HepG2 (cell line): ENCODE measurements at regions of chr1 and their contacts with region 1.

Region 1: DNA sequence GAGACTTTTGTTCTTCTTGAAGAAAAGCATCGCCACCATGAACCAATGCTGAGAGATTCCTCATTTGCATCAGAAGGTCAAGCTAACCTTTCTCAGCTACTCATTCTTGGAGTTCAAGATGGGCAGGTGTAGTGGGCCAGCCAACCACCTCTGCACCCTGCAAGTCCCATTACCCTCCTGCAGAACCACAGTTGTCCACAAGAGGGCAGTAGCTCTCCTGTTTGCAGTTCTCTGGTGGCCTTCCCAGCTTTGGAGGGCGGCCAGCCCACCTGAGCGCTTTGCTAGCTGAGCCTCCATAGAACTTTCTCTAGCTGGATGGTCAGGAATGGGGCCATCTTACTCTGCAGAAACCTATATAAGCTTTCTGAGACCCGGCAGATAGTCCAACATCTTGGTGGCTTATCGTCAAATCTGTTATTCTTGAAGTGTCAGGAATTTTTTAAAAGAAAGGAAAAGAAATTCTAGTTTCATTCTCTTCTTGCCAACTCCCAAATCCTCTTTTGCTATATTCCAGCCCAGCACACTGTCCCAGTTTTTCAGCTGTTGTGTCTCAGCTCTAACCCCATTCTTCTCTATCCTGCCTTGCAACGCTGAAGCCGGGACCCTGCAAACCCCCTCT is 11.0 kb upstream of the LMX1A start:
- DNase-seq: peak; percentile 73
- ATAC-seq: peak; percentile 89
- H3K4me3 ChIP-seq: no peak overlapping the region
- H3K27ac ChIP-seq: no peak overlapping the region
- H3K4me1 ChIP-seq: peaks cover 10% of the 10 kb centered on the region
- H3K27me3 ChIP-seq: no peaks in the 10 kb centered on the region; a peak in 1 of 5 replicates
- CTCF ChIP-seq: peak; percentile 83
- EP300 ChIP-seq: no peak
- POLR2A ChIP-seq: no peak
- RAD21 ChIP-seq: no peak

Region 2: GRCh38 chr1:165114022-165114888 is 253.2 kb before region 1 on chr1:
- CTCF ChIA-PET with region 1: interaction called, 3 read pairs
- POLR2A ChIA-PET with region 1: no interaction called
- in situ Hi-C with region 1: no loop called
- intact Hi-C with region 1: loop called (anchors 1 kb)
- DNase-seq: peak; percentile 35
- ATAC-seq: peak; percentile 67
- H3K4me3 ChIP-seq: no peak overlapping the region
- H3K27ac ChIP-seq: no peak overlapping the region
- H3K4me1 ChIP-seq: no peaks in the 10 kb centered on the region
- H3K27me3 ChIP-seq: 0 out of 5 replicates have a peak, but pooled peaks cover 0 to 10% of the 10 kb centered on the region in 2 experiments
- CTCF ChIP-seq: peak; percentile 64
- EP300 ChIP-seq: no peak
- POLR2A ChIP-seq: no peak
- RAD21 ChIP-seq: peak; percentile 43; the same call in 1 of the 2 replicates

Region 3: GRCh38 chr1:165129568-165130164 is 237.8 kb before region 1 on chr1:
- CTCF ChIA-PET with region 1: interaction called, 8 read pairs
- POLR2A ChIA-PET with region 1: no interaction called
- in situ Hi-C with region 1: loop called (anchors 5 kb)
- intact Hi-C with region 1: loop called (anchors 1 kb)
- DNase-seq: peak; percentile 83
- ATAC-seq: peak; percentile 100
- H3K4me3 ChIP-seq: no peak overlapping the region
- H3K27ac ChIP-seq: no peak overlapping the region
- H3K4me1 ChIP-seq: peaks cover 11% of the 10 kb centered on the region
- H3K27me3 ChIP-seq: no peaks in the 10 kb centered on the region
- CTCF ChIP-seq: peak; percentile 95
- EP300 ChIP-seq: no peak
- POLR2A ChIP-seq: no peak
- RAD21 ChIP-seq: no peak

Region 4: GRCh38 chr1:165144757-165145397 is 222.6 kb before region 1 on chr1:
- CTCF ChIA-PET with region 1: interaction called, 5 read pairs
- POLR2A ChIA-PET with region 1: no interaction called
- in situ Hi-C with region 1: no loop called
- intact Hi-C with region 1: loop called (anchors 1 kb)
- DNase-seq: peak; percentile 44
- ATAC-seq: peak; percentile 95
- H3K4me3 ChIP-seq: no peak overlapping the region
- H3K27ac ChIP-seq: no peak overlapping the region
- H3K4me1 ChIP-seq: peaks cover 9% of the 10 kb centered on the region
- H3K27me3 ChIP-seq: no peaks in the 10 kb centered on the region
- CTCF ChIP-seq: peak; percentile 85
- EP300 ChIP-seq: no peak
- POLR2A ChIP-seq: no peak
- RAD21 ChIP-seq: 0 out of 2 replicates have a peak, but pooled peaks have one; percentile 21

Region 5: GRCh38 chr1:165537356-165538109 is 170.0 kb after region 1 on chr1:
- CTCF ChIA-PET with region 1: no interaction called
- POLR2A ChIA-PET with region 1: no interaction called
- in situ Hi-C with region 1: no loop called
- intact Hi-C with region 1: no loop called
- DNase-seq: no peak
- ATAC-seq: no peak
- H3K4me3 ChIP-seq: no peak overlapping the region
- H3K27ac ChIP-seq: no peak overlapping the region
- H3K4me1 ChIP-seq: peaks cover 6% of the 10 kb centered on the region; the same call in 1 of the 2 replicates
- H3K27me3 ChIP-seq: no peaks in the 10 kb centered on the region; a peak in 1 of 5 replicates
- CTCF ChIP-seq: no peak
- EP300 ChIP-seq: no peak
- POLR2A ChIP-seq: no peak
- RAD21 ChIP-seq: no peak